Posterior vena cava (tissue), 2 donors: ENCODE measurements at regions of chr18 and their contacts with region 1.

Region 1: GRCh38 chr18:80034068-80034851 is at the start of gene RBFA:
- DNase-seq: peak; percentile 100
- total RNA-seq, gene RBFA: 15.8 to 17.4 TPM

Region 2: GRCh38 chr18:79826966-79827365 is 207.3 kb before region 1 on chr18:
- intact Hi-C with region 1: no loop called
- DNase-seq: no peak

Region 3: DNA sequence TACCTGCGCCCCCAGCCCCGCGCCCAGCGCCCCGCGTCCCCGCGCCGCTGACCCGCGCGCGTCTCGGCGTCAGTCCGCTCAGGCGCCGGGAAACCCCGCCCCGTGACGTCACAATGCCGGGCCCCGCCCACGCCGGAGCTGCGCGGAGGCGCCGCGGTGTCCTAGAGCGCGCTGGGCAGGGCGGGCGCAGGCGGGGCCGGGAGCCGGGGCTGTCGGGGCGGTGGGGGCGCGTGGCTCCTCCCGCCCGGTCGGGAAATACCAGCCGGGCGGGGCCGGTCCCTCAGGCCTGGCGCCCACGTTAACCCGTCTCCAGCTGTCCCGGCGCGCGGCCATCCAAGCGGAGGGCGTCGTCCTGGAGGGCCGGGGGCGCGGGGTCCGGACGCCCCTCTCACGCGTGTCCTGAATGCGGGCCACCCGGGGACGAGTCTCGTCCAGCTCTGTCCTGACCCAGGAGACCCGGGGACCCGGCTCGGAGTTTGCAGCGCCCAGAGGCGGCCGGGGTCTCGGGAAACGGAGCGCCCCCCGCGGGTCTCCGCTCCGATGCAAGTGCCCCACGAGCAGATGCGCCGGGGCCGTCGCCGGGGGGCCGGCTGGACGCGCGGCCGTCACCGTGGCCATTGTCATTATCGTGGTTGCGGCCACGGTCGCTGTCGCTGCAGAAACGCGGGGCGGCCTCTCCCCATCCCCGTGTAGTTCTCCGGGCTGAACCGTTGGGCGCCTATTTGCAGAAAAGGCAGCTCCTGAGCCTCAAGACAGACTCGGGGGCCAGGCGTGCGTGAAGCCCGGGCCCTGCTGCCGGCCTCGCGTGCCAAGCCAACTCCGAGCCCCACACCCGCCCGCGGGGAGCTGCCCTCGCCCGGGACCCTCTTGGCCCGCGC is 82.4 kb before region 1 on chr18 and contains the start of gene SLC66A2:
- intact Hi-C with region 1: loop called in 1 of 2 experiments (anchors 10 kb)
- DNase-seq: peak; percentile 98
- total RNA-seq, gene SLC66A2: 32.0 to 36.8 TPM

Region 4: DNA sequence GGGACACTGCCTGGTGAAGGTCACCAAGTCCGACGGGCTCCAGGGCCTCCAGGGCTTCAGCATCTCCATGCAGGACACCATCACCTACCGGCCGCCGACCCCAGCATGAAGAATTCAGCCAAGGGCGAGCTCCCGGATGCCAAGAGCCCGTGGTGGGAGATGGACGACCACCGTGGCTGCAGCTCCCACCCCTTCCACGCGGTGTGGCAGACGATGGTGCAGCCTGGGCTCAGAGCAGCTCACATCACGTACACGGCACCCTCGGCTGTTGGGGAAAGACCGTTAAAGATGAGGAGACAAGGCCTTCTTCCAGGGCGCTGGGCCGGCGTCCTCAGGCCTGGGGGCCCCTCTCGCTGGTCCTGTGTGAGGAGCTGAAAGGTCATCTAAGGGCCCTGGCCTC is 43.6 kb after region 1 on chr18:
- intact Hi-C with region 1: no loop called
- DNase-seq: no peak

Region 5: DNA sequence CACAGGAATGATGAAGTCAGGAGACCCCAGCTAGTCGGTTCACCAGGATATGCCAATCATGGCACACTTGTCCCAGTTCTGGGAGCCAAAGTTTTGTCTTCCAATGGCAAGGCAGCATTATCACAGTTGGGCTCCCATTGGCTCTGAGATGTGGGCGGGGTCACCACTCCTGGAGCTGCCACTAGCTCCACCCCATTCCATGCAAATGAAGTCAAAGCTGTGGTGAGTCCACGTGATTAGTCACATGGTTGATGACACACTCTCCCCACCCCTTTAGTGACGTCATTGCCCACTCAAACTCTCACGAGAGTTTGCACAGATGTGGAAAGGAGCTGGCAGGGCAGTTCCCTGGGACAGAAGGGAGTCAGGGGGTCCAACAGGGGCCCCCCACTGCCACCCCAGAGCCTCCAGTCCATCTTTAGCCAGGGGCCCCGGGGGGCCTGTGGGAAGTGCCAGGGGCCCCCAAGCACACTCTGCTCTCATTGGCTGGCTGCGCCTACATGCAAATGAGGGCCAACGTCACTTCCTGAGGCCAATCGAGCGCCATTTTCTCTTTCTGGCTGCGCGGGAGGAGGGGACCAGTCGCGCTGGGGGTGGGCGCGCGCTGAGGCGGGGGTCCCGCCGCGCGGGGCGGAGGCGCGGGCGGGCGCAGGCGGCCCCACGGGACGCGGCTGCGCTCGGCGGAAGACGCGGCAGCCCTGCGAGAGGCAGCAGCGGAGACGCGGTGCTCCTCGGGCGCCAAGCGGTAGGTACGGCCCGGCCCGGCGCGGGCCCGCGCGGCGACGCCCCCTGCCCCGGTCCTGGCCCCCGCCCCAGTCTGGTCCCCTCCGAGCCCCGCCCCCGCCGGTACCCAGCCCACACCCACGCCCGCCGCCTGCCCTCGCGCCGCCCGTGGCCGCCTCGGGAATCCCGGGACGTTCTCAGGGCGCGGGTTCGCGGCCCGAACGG is 74.7 kb after region 1 on chr18 and contains the start of gene ADNP2:
- intact Hi-C with region 1: loop called in 1 of 2 experiments (anchors 5 kb)
- DNase-seq: peak; percentile 95
- total RNA-seq, gene ADNP2: 15.3 to 19.6 TPM